ENCODE measurements at regions of chr7 and their contacts with region 1.

Region 1: DNA sequence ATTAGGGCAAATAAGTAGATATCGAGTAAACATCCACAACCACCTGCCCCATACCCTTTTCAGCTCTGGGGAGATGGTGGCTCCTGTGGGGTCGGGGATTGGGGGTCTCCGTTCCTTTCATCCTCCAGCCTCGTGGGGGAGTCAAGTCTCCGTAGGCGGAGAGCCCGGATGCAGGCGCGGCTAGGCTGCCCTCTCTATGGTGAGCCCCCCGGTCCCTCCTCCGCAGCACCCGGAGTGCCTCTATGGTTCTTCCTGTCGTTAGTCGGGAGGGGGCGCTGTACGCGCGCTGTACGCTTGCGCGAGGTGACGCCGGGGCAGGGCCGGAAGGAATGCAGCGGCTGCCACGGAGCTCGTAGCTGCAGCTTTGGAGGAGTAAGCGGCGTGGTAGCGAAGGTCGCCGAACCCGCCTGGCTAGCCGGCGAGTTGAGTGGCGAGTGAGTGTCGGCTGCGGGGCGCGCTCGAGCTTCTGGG is 14.8 kb upstream of the MMD2 start:
- DNase-seq: peak; percentile 94
- H3K4me3 Mint-ChIP-seq: peak overlapping the region; percentile 97
- H3K27ac Mint-ChIP-seq: peak overlapping the region; percentile 91
- H3K4me1 Mint-ChIP-seq: peaks cover 19% of the 10 kb centered on the region
- H3K27me3 Mint-ChIP-seq: no peaks in the 10 kb centered on the region

Region 2: GRCh38 chr7:4753711-4754432 is 219.9 kb before region 1 on chr7:
- CTCF ChIA-PET with region 1: no interaction called
- POLR2A ChIA-PET with region 1: no interaction called
- DNase-seq: peak; percentile 86
- H3K4me3 Mint-ChIP-seq: no peak overlapping the region
- H3K27ac Mint-ChIP-seq: no peak overlapping the region
- H3K4me1 Mint-ChIP-seq: peaks cover 17% of the 10 kb centered on the region
- H3K27me3 Mint-ChIP-seq: no peaks in the 10 kb centered on the region

Region 3: GRCh38 chr7:4889682-4890081 is 84.1 kb before region 1 on chr7:
- CTCF ChIA-PET with region 1: no interaction called
- POLR2A ChIA-PET with region 1: no interaction called
- DNase-seq: no peak
- H3K4me3 Mint-ChIP-seq: no peak overlapping the region
- H3K27ac Mint-ChIP-seq: no peak overlapping the region
- H3K4me1 Mint-ChIP-seq: no peaks in the 10 kb centered on the region
- H3K27me3 Mint-ChIP-seq: peaks cover 2% of the 10 kb centered on the region

Region 4: DNA sequence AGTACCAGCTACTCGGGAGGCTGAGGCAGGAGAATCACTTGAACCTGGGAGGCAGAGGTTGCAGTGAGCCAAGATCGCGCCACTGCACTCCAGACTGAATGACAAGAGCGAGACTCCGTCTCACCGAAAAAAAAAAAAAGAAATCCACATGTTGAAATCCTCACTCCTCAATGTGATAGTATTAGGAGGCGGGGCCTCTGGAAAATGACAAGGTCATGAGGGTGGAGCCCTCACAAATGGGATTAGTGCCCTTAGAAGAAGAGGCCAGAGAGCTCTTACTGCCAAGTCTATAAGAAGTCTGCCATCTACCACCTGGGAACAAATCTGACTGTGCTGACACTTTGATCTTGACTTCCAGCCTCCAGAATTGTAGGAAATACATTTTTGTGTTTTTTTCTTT is 25.4 kb before region 1 on chr7:
- CTCF ChIA-PET with region 1: no interaction called
- POLR2A ChIA-PET with region 1: no interaction called
- DNase-seq: no peak
- H3K4me3 Mint-ChIP-seq: no peak overlapping the region
- H3K27ac Mint-ChIP-seq: no peak overlapping the region
- H3K4me1 Mint-ChIP-seq: no peaks in the 10 kb centered on the region
- H3K27me3 Mint-ChIP-seq: peaks cover 5% of the 10 kb centered on the region

Region 5: DNA sequence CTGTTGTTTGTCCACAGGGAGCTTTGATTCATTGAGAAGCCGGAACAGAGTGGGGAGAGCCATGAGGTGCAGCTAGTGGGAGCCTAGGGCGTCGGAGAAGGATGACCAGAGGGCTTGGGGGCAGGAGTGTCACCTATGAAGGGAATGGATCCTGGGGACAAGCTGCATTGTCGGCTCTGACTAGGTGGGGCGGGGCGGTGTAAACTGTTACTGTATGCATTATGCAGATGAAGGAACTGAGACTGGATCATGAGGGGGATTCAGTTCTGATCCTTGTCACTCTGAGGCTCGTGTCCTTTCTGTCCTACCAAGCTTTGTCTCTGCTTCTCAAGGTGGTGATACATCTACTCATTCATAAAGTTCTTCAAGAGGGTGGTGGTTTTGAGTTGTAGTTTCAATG is 25.1 kb after region 1 on chr7:
- CTCF ChIA-PET with region 1: interaction called, 12 read pairs
- POLR2A ChIA-PET with region 1: interaction called, 3 read pairs
- DNase-seq: no peak
- H3K4me3 Mint-ChIP-seq: no peak overlapping the region
- H3K27ac Mint-ChIP-seq: no peak overlapping the region
- H3K4me1 Mint-ChIP-seq: no peaks in the 10 kb centered on the region
- H3K27me3 Mint-ChIP-seq: no peaks in the 10 kb centered on the region

Region 6: GRCh38 chr7:5045558-5046396 is 72.0 kb after region 1 on chr7 and contains the start of gene RBAK:
- CTCF ChIA-PET with region 1: interaction called, 13 read pairs
- POLR2A ChIA-PET with region 1: interaction called, 6 read pairs
- DNase-seq: peak; percentile 91
- H3K4me3 Mint-ChIP-seq: peak within 1 kb of the TSS; percentile 94
- H3K27ac Mint-ChIP-seq: peak within 1 kb of the TSS; percentile 85
- H3K4me1 Mint-ChIP-seq: peaks cover 35% of the 10 kb centered on the region
- H3K27me3 Mint-ChIP-seq: no peaks in the 10 kb centered on the region
- total RNA-seq, gene RBAK: 11.7 to 12.5 TPM

Region 7: GRCh38 chr7:5064391-5065106 is 90.8 kb after region 1 on chr7:
- CTCF ChIA-PET with region 1: interaction called, 10 read pairs
- POLR2A ChIA-PET with region 1: no interaction called
- DNase-seq: no peak
- H3K4me3 Mint-ChIP-seq: no peak overlapping the region
- H3K27ac Mint-ChIP-seq: no peak overlapping the region
- H3K4me1 Mint-ChIP-seq: no peaks in the 10 kb centered on the region
- H3K27me3 Mint-ChIP-seq: no peaks in the 10 kb centered on the region

Region 8: DNA sequence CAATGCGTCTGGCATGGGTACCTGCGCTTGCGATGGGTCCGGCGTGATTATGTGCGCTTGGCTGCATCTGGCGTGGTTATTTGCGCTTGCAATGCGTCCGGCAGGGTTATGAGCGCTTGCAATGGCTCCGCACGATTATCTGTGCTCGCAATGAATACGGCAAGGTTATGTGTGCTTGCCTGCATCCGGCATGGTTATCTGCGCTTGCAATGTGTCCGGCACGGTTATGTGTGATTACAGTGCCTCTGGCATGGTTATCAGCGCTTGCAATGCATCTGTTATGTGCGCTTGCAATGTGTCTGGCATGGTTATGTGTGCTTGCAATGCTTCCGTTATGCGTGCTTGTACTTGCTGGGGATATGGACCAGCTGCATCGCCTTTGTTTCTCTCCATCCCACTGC is 109.5 kb after region 1 on chr7:
- CTCF ChIA-PET with region 1: interaction called, 60 read pairs
- POLR2A ChIA-PET with region 1: no interaction called
- DNase-seq: no peak
- H3K4me3 Mint-ChIP-seq: no peak overlapping the region
- H3K27ac Mint-ChIP-seq: no peak overlapping the region
- H3K4me1 Mint-ChIP-seq: peaks cover 3% of the 10 kb centered on the region
- H3K27me3 Mint-ChIP-seq: peaks cover 6% of the 10 kb centered on the region

Region 9: DNA sequence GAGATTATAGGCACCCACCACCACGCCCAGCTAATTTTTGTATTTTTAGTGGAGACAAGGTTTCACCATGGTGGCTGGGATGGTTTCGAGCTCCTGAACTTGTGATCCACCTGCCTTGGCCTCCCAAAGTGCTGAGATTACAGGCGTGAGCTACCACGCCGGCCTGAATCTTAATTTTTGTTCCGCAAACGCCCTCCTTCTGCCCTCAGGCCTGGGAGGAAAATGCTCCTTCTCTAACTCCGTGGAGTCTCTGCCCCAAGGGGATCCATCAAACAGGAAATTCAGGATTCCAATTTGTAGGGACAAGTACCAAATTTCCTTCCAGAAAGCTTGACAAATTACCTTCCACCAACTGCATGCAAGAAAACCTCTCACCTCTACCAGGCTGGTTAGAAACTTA is 115.1 kb after region 1 on chr7:
- CTCF ChIA-PET with region 1: interaction called, 60 read pairs
- POLR2A ChIA-PET with region 1: no interaction called
- DNase-seq: no peak
- H3K4me3 Mint-ChIP-seq: no peak overlapping the region
- H3K27ac Mint-ChIP-seq: no peak overlapping the region
- H3K4me1 Mint-ChIP-seq: peaks cover 3% of the 10 kb centered on the region
- H3K27me3 Mint-ChIP-seq: peaks cover 5% of the 10 kb centered on the region

Region 10: DNA sequence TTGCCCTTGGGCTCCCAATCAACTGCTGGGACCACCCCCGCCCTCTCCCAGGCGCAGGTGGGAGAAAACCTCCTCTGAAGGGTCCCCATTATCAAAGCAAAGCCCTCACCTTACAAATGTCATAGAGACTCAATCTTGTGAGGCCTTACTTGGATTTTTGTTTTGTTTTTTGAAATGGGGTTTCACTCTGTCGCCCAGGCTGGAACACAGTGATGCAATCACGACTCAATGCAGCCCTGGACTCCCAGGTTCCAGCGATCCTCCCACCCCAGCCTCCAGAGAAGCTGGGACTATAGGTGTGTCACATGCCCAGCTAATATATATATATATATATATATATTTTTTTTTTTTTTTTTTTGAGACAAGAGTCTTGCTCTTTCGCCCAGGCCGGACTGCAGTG is 158.8 kb after region 1 on chr7:
- CTCF ChIA-PET with region 1: interaction called, 15 read pairs
- POLR2A ChIA-PET with region 1: no interaction called
- DNase-seq: no peak
- H3K4me3 Mint-ChIP-seq: no peak overlapping the region
- H3K27ac Mint-ChIP-seq: no peak overlapping the region
- H3K4me1 Mint-ChIP-seq: peaks cover 35% of the 10 kb centered on the region
- H3K27me3 Mint-ChIP-seq: peaks cover 8% of the 10 kb centered on the region

Measured in activated CD4-positive, alpha-beta memory T cell treated with anti-CD3 and anti-CD28 coated beads, Interleukin-2, amount 10 ng/mL, durations not matched to agents 7 days and 5 days (primary cell).